ENCODE measurements at regions of chr10 and their contacts with region 1.

Region 1: DNA sequence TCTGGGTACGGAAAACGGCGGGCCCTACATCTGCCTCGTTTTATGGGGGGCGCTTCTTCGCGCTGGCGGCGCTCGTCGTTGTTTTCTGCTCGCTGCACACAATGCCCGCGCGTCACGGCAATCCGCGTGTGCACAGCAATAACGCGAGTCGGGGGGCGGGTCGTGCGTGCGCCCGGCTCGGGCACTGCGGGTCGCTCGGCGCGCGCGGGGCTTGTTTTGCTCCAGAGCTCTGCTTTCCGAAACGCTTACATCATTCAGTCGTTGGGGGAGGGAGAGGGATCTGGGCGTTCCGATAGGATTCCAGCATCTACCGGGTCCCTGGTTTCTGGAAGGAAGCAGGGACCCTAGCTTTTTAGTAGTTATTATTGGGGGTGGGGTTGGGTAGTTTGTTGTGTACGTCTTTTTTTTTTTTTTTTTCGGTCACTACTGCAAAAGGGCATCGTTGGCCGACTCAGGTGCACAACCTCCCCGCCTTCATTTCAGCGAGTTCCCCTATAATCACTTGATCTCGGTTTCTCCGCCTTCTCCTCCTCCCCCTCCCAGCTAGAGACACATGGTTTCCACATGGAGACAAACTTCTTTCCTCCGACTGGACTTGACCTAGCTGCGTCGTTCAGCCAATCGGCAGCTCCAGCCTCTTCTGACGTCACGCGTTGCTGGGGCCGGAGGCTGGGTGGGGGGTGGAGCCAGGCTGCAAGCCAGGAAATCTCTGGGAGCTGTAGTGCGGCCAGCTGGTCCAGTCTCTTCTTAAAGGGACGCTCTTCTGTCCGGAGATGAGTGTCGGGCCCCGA is 3.5 kb downstream of the MXI1 start:
- DNase-seq: peak; percentile 95
- ATAC-seq: peak; percentile 71
- H3K4me3 Mint-ChIP-seq: peak overlapping the region; percentile 97
- H3K27ac Mint-ChIP-seq: peak overlapping the region; percentile 96
- H3K4me1 Mint-ChIP-seq: peaks cover 49% of the 10 kb centered on the region
- H3K27me3 Mint-ChIP-seq: peaks cover 15% of the 10 kb centered on the region
- CTCF ChIP-seq: no peak

Region 2: GRCh38 chr10:110016039-110016438 is 194.8 kb before region 1 on chr10:
- CTCF ChIA-PET with region 1: no interaction called
- POLR2A ChIA-PET with region 1: no interaction called
- intact Hi-C with region 1: loop called (anchors 10 kb)
- DNase-seq: no peak
- ATAC-seq: no peak
- H3K4me3 Mint-ChIP-seq: no peak overlapping the region
- H3K27ac Mint-ChIP-seq: peak overlapping the region; percentile 79
- H3K4me1 Mint-ChIP-seq: peaks cover 70% of the 10 kb centered on the region
- H3K27me3 Mint-ChIP-seq: no peaks in the 10 kb centered on the region
- CTCF ChIP-seq: no peak

Region 3: DNA sequence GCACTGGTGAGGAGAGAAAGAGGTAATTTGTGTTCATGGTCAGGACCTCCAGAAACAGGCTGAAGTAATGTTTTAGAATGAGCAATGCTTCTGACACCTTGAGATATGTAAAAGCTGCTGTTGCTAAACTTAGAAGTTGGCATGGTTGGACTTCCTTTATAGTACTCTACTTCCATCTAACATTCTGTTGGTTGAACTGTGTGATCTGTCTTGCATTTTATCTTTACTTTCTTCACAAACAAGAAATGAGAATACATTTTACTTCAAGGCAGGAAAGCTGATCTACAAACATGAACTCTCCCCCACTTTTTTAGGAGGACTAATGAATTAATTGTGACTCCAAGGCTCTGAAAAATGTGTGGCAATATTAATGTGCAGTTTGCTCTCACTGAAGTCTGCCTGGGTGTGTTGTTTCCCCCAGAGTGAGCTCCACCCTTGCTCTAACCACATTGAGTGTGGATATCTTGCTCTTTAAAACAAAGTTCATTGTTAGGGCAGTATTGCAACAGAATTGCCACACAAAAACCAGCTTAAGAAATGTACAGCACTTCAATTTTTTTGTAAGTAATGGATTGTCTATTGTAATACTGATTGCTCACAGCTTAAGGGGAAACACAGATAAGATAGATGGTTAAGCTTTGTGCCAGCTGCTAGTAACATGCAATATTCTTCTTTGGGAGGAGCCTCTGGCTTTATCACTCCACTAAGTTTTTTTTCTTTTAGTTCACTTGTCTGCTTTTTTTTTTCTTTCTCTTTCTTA is 134.1 kb before region 1 on chr10:
- CTCF ChIA-PET with region 1: no interaction called
- POLR2A ChIA-PET with region 1: no interaction called
- intact Hi-C with region 1: no loop called
- DNase-seq: peak; percentile 41
- ATAC-seq: peak; percentile 60
- H3K4me3 Mint-ChIP-seq: peak overlapping the region; percentile 73
- H3K27ac Mint-ChIP-seq: peak overlapping the region; percentile 92
- H3K4me1 Mint-ChIP-seq: peaks cover 83% of the 10 kb centered on the region
- H3K27me3 Mint-ChIP-seq: no peaks in the 10 kb centered on the region
- CTCF ChIP-seq: no peak

Region 4: DNA sequence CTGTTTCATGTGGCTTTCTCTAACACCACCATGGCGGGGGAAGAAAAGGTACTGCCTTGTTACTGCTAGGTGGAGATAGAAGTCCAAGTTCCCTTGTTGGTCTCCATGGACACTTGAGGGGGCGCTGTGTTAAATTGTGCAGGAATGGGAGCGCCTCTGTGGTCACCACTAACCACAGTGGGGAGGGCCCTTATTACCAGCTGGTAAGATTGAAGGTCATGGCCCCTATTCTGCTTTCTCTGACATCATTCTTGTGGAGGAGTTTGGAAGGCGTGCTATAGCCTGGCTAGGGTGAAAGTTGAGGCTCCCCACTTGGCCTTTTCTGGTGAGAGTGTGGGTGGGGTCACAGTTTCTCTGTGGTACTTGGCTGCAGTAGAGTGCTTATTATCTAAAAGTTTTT is 18.3 kb before region 1 on chr10:
- CTCF ChIA-PET with region 1: interaction called, 12 read pairs
- POLR2A ChIA-PET with region 1: interaction called, 4 read pairs
- intact Hi-C with region 1: no loop called
- DNase-seq: peak; percentile 69
- ATAC-seq: peak; percentile 88
- H3K4me3 Mint-ChIP-seq: no peak overlapping the region
- H3K27ac Mint-ChIP-seq: no peak overlapping the region
- H3K4me1 Mint-ChIP-seq: peaks cover 13% of the 10 kb centered on the region
- H3K27me3 Mint-ChIP-seq: peaks cover 37% of the 10 kb centered on the region
- CTCF ChIP-seq: no peak

Region 5: GRCh38 chr10:110252151-110252550 is 41.3 kb after region 1 on chr10:
- CTCF ChIA-PET with region 1: interaction called, 6 read pairs
- POLR2A ChIA-PET with region 1: interaction called, 6 read pairs
- intact Hi-C with region 1: loop called (anchors 5 kb)
- DNase-seq: no peak
- ATAC-seq: peak; percentile 25
- H3K4me3 Mint-ChIP-seq: no peak overlapping the region
- H3K27ac Mint-ChIP-seq: no peak overlapping the region
- H3K4me1 Mint-ChIP-seq: peaks cover 33% of the 10 kb centered on the region
- H3K27me3 Mint-ChIP-seq: peaks cover 10% of the 10 kb centered on the region
- CTCF ChIP-seq: no peak

Region 6: GRCh38 chr10:110279407-110279986 is 68.6 kb after region 1 on chr10:
- CTCF ChIA-PET with region 1: interaction called, 57 read pairs
- POLR2A ChIA-PET with region 1: interaction called, 4 read pairs
- intact Hi-C with region 1: loop called (anchors 1 kb)
- DNase-seq: peak; percentile 63
- ATAC-seq: peak; percentile 51
- H3K4me3 Mint-ChIP-seq: no peak overlapping the region
- H3K27ac Mint-ChIP-seq: no peak overlapping the region
- H3K4me1 Mint-ChIP-seq: peaks cover 15% of the 10 kb centered on the region
- H3K27me3 Mint-ChIP-seq: no peaks in the 10 kb centered on the region
- CTCF ChIP-seq: peak; percentile 74

Region 7: DNA sequence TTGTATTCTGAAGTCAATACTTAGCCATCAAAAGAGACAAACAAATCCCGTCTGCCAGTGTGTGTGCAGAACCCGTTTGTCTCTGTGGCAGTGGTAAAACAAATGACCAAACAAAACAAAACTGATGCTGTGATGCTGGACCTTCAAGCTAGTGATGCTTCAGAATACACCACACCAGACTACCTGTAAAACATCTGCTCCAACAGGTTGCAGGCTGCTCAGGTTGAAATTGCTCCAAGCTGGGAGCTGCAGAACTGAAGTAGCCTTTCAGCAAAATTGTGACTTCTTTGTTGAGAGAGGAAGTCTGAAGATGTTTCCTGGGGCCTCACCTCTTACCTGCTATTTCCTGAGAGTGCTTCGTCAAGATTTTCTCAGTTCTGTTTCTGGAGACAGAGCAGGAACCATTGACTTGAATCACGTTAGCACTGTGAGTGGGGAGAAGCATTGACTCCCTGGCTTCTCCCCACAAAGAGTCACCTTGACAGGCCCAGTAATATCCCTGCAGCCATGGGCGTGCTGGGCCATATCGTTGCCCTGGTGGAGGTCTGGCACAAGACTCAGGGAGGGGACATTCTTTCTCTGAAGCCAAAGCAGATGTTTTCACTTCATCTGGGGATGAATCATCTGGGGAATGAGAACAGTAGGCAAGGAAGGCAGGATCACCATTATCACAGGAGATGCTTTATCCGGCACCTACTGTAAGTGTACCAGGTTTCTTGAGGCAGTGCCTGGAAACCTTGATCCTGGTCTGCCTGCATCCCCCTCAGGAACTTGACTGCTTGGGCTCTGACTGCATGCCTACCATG is 513.5 kb after region 1 on chr10:
- CTCF ChIA-PET with region 1: no interaction called
- POLR2A ChIA-PET with region 1: no interaction called
- intact Hi-C with region 1: no loop called
- DNase-seq: peak; percentile 21
- ATAC-seq: peak; percentile 75
- H3K4me3 Mint-ChIP-seq: no peak overlapping the region
- H3K27ac Mint-ChIP-seq: peak overlapping the region; percentile 66
- H3K4me1 Mint-ChIP-seq: peaks cover 44% of the 10 kb centered on the region
- H3K27me3 Mint-ChIP-seq: no peaks in the 10 kb centered on the region
- CTCF ChIP-seq: no peak